ENCODE measurements at regions of chr5 and their contacts with region 1.

Region 1: DNA sequence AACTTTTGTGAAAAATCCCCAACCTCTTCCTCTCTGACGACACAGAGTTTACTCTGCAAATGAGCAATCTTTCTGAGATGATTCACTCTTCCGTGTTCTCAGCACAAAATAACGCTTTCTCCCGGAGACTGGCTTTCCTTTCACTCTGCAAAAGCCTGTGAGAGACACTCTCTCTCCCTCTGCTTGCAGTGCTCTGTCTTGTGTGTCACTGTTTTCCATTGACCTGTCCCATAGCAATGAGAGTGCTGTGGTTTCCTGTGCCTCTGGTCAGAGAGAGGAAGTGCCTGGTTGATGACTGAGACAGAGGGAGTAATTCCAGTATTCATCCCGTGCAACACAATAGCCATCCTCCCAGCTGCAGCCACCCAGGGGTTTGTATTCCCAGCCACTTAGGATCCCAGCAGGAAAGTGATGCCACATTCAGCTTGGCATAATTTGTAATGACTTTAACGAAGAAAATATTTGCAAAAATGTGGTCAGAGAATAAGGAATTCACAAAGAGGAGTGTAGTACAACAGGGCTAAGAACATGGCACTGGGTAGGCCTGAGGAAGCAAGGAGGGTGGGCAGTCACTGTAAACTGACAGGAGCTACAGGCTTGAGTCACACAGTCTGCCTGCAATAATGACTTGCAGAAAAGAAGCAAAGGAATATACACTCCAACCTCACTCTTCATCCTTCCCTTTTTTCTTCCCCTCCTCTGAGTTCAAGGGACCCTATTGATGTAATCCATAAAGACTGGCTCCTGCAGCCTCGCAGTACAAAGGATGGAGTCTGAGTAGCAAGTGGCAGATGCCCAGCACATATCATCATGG is 463.5 kb upstream of the RGMB start:
- DNase-seq: peak; percentile 99
- ATAC-seq: peak; percentile 90
- H3K4me3 ChIP-seq: peak overlapping the region; percentile 52; the same call in 1 of the 2 replicates
- H3K27ac ChIP-seq: peak overlapping the region; percentile 95
- H3K4me1 ChIP-seq: peaks cover 68% of the 10 kb centered on the region
- H3K27me3 ChIP-seq: no peaks in the 10 kb centered on the region
- CTCF ChIP-seq: no peak

Region 2: GRCh38 chr5:98214240-98215051 is 95.5 kb before region 1 on chr5:
- CTCF ChIA-PET with region 1: no interaction called
- POLR2A ChIA-PET with region 1: no interaction called
- intact Hi-C with region 1: loop called (anchors 2 kb)
- DNase-seq: peak; percentile 94
- ATAC-seq: peak; percentile 92
- H3K4me3 ChIP-seq: 0 out of 2 replicates have a peak overlapping the region, but pooled peaks have one; percentile 5
- H3K27ac ChIP-seq: peak overlapping the region; percentile 79
- H3K4me1 ChIP-seq: peaks cover 22% of the 10 kb centered on the region
- H3K27me3 ChIP-seq: no peaks in the 10 kb centered on the region
- CTCF ChIP-seq: no peak

Measured in PC-3 (cell line).